ENCODE measurements at regions of chr6 and their contacts with region 1.

Region 1: DNA sequence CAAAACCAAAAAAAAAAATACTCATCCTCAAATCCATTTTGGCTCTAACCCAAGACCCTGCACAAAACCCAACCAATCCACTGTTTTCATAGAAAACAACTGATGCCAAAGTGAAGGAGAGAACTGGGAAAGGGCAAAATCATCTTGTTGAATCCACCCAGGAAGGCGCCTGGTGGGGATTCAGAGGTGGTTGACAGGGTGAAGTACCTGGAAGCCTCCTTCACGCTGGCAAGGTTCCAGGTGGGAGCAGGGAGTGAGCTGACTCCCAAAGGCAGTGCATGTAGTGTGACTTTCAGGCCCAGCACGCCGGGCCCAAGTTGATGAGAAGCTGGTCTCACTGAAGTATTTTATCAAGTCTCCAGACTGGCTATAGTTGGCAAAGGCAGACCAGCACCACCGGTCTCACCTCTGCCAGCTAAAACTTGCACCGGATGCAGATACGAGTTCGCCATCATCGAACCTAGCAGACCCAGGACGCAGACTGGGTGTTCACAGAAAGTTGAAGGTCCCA is 16.5 kb downstream of the PPP1R10 start:
- DNase-seq: no peak
- H3K4me3 ChIP-seq: no peak overlapping the region
- H3K27ac ChIP-seq: no peak overlapping the region
- H3K4me1 ChIP-seq: no peaks in the 10 kb centered on the region
- H3K27me3 ChIP-seq: no peaks in the 10 kb centered on the region
- CTCF ChIP-seq: no peak
- EP300 ChIP-seq: no peak
- POLR2A ChIP-seq: no peak
- RAD21 ChIP-seq: no peak

Region 2: DNA sequence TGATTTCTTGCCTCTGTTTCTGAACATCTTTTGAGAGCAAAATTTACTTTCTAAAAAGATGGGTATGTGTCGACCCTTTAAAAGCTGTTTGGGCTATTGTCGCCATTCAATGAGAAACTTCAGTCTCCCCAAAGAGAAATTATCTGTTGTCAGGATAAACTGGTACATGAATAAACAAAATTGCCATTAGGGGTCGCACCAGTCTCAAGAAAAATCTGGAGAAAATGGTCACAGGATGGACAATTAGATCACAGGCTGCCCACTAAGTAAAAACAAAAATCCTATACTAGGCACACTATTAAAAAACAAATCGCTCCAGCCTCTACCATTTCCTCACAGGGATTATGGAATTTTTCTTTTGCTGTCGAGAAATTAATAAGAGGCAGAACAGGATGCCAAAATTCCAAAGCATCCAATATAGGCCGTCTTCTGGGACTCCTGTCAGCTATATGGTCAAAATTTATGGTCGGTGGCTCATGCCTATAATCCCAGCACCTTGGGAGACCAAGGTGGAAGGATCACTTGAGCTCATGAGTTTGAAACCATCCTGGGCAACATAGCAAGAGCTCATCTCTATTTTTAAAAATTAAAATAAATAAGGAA is 116.7 kb before region 1 on chr6:
- CTCF ChIA-PET with region 1: interaction called, 35 read pairs
- POLR2A ChIA-PET with region 1: interaction called, 6 read pairs
- DNase-seq: no peak
- H3K4me3 ChIP-seq: no peak overlapping the region
- H3K27ac ChIP-seq: no peak overlapping the region
- H3K4me1 ChIP-seq: peaks cover 0 to 2% (median 0%) of the 10 kb centered on the region in 4 experiments; a peak in 3 of 7 replicates
- H3K27me3 ChIP-seq: peaks cover 7 to 23% (median 17%) of the 10 kb centered on the region in 4 experiments; a peak in 6 of 7 replicates
- CTCF ChIP-seq: peak in 2 of 3 experiments; percentile 49 to 63; a peak in 3 of 4 replicates
- EP300 ChIP-seq: no peak
- POLR2A ChIP-seq: no peak
- RAD21 ChIP-seq: peak; percentile 68 to 75

Region 3: DNA sequence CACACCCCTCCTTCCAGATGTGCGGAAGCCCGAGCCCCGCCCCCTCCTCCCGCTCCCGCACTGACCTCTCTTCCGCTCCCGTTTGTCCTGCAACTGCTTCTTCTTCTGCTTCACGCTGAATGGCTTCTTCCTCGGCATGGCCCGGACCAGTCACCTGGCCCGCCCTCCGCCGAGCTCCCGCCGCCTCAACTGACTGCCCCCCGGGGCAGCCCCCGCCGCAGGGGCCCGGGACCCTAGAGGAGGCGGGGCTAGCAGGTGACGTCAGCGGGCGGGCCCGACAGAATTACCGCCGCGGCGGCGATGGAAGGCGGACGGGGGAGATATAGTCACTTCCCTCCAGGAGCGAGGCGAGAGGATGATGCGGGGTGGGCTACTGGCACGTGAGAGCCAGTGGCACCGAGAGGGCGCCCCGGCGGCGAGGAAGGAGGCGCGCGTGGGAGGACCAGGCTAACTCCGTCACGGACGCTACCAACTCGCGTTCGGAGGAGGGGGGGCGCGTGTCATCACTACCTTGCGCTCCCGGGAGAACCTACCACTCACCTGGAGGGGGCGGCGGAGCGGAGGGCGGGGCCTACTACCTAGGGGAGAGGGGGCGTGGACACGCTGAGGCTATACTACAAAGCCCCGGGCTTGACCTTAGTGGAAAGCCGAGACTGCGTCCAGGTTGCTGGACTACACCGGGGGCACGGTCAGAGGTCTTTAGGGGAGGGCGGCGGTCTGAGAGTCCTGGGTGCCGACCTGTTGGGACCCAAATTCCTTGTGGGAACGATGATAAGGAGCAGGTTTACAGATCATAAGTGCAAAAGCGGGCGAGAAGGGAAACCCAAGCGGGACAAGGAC is 44.2 kb before region 1 on chr6 and contains the start of gene GNL1:
- CTCF ChIA-PET with region 1: interaction called, 6 read pairs
- POLR2A ChIA-PET with region 1: interaction called, 10 read pairs
- DNase-seq: peak; percentile 90 to 98
- H3K4me3 ChIP-seq: peak within 1 kb of the TSS; percentile 76 to 91 (median 89)
- H3K27ac ChIP-seq: peak within 1 kb of the TSS; percentile 93
- H3K4me1 ChIP-seq: peaks cover 0 to 3% (median 1%) of the 10 kb centered on the region in 4 experiments; a peak in 1 of 7 replicates
- H3K27me3 ChIP-seq: no peaks in the 10 kb centered on the region
- CTCF ChIP-seq: no peak
- EP300 ChIP-seq: peak in 1 of 2 experiments; percentile 99; a peak in 2 of 3 replicates
- POLR2A ChIP-seq: no peak
- RAD21 ChIP-seq: no peak
- total RNA-seq, gene GNL1: 67.8 and 75.4 TPM in 2 replicates

Region 4: DNA sequence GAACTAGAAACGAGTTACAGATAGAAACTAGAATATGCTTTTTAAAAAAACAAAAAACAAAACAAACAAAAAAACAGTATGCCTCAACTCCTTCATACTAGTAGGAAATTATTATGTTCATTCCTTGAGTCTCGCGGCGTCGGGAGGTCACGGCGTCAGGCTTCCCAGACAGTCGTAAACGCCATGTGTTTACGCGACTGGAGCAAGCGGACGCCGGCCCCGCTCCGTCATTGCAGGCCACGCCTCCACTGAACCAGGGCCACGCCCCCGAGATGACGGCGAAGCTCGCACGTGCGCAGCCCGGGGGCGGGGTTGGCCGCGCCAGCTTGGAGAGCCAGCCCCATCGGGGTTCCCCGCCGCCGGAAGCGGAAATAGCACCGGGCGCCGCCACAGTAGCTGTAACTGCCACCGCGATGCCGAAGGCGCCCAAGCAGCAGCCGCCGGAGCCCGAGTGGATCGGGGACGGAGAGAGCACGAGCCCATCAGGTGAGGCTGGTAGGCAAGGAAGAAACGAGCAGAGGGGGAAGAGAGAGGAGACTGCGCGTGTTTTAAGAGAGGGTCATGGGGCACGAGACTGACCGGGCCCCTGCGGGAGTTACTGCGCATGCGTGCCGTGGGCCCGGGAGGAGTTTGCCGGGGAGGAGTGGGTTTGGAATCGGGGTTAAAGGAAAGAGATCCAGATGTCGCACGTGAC is 29.3 kb before region 1 on chr6 and contains the start of gene ABCF1:
- CTCF ChIA-PET with region 1: interaction called, 11 read pairs
- POLR2A ChIA-PET with region 1: interaction called, 712 read pairs
- DNase-seq: peak; percentile 90 to 100
- H3K4me3 ChIP-seq: peak within 1 kb of the TSS; percentile 88 to 98 (median 95)
- H3K27ac ChIP-seq: peak within 1 kb of the TSS; percentile 95
- H3K4me1 ChIP-seq: peaks cover 0 to 4% (median 2%) of the 10 kb centered on the region in 4 experiments; a peak in 5 of 7 replicates
- H3K27me3 ChIP-seq: no peaks in the 10 kb centered on the region
- CTCF ChIP-seq: no peak
- EP300 ChIP-seq: no peak
- POLR2A ChIP-seq: peak in 1 of 2 experiments; percentile 94; a peak in 2 of 3 replicates
- RAD21 ChIP-seq: no peak
- total RNA-seq, gene ABCF1: 119 and 123 TPM in 2 replicates

Region 5: DNA sequence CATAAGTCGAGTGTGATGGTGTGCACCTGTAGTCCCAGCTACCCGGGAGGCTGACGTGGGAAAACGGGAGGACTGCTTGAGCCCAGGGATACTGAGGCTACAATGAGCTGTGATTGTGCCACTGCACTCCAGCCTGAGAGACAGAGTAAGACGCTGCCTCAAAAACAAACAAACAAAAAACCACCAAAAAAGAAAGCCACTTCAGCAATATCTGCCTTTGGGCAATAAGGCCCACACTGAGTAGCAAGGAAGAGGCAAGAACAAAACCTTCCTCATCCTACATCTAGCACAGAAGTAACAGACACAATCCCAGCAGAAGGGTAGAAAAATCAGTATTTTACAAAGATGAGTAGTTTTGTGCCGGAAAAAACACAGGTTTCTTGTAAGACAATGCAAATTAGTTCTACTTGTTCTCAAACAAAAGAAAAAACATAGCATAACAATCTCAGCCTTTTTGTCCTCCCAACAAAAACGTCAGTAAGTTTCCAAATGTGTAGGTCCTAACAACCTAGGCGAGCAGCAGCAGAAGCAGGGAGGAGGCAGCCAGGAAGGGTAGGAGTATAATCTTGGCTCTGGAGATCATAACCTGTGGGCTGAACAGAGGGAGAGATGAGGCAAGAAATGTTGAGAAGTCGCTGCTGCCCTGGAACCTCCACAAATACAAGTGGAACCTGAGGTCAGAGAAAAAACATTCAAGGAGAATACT is 10.8 kb after region 1 on chr6:
- CTCF ChIA-PET with region 1: interaction called, 20 read pairs
- POLR2A ChIA-PET with region 1: interaction called, 712 read pairs
- DNase-seq: no peak
- H3K4me3 ChIP-seq: no peak overlapping the region
- H3K27ac ChIP-seq: no peak overlapping the region
- H3K4me1 ChIP-seq: peaks cover 0 to 6% (median 3%) of the 10 kb centered on the region in 4 experiments; a peak in 4 of 7 replicates
- H3K27me3 ChIP-seq: no peaks in the 10 kb centered on the region
- CTCF ChIP-seq: no peak
- EP300 ChIP-seq: no peak
- POLR2A ChIP-seq: no peak
- RAD21 ChIP-seq: no peak

Region 6: DNA sequence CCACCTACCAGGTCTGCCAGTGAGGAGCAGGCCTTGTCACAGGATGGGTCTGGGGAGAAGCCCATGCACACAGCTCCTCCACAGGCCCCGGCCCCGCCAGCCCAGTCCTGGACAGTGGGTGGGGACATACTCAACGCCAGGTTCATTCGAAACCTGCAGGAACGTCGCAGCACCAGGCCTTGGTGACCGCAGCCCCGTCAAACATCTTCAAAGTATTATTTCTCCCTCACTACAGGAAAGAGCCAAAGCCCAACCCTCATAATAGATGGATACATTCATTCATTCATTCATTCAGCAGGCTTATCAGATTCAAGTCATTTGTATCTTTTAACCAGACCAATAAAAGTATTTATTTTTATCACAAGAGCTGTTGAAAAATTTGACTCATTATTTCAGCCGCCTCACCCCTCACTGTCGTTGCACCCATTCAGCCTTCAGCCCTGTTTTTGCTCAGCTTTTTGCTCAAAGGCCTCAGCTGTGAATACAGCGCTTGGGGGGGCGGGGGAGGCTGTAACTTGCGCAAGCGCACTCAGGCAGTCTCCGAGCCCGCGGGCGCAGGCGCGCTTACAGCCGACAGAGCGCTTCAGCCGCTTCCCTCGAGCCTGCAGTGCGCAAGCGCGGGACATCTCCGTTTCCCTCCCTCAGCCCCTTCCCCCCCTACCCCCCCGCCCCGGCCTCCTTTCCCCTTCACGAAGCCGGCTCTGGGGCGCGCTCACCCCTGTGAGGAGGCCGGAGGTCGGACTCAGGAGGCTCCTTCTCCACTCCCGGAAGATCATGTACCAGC is 46.1 kb after region 1 on chr6 and contains the start of gene C6orf136:
- CTCF ChIA-PET with region 1: interaction called, 5 read pairs
- POLR2A ChIA-PET with region 1: interaction called, 16 read pairs
- DNase-seq: peak; percentile 75 to 87
- H3K4me3 ChIP-seq: peak within 1 kb of the TSS; percentile 74 to 91 (median 85)
- H3K27ac ChIP-seq: peak within 1 kb of the TSS; percentile 66
- H3K4me1 ChIP-seq: peaks cover 0 to 6% (median 4%) of the 10 kb centered on the region in 4 experiments; a peak in 5 of 7 replicates
- H3K27me3 ChIP-seq: no peaks in the 10 kb centered on the region
- CTCF ChIP-seq: no peak
- EP300 ChIP-seq: no peak
- POLR2A ChIP-seq: no peak
- RAD21 ChIP-seq: no peak
- total RNA-seq, gene C6orf136: 18.2 and 20.8 TPM in 2 replicates

Region 7: DNA sequence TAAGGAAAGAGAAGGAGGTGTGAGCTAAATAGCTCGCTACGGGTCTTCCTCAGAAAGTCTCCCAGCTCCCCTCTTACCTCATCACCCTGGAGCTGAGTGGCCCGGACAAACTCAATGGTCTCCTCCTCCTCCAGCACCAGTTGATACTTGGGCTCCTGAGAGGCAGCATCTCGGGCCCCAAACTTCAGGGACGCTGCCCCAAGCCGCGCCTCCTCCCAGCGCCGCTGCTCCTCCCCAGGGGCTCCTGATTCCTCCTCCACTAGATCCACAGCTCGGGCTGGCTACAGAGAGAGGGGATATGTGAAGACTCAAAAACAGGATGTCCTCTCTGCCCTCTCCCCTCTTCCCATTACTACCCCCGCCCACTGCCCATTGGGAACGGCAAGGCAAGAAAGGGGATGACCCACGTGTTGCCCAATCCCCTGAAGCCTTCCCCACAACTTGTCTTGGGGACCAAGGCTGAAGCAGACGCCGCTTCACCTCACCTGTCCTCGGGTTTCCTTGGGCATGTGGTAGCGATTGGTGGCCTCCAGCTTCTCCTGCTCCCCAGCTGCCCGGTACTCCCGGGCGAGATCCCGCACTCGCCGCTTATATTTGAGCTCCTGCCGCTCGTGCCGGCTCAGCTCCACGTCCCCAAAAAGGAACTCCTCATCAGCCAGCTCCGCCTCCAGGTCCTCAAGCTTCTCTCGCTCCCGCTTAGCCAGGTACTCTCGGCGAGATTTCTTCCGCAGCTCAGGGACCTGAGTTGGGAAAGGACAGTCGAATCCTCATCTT is 64.7 kb after region 1 on chr6:
- CTCF ChIA-PET with region 1: interaction called, 3 read pairs
- POLR2A ChIA-PET with region 1: interaction called, 10 read pairs
- DNase-seq: no peak
- H3K4me3 ChIP-seq: no peak overlapping the region
- H3K27ac ChIP-seq: no peak overlapping the region
- H3K4me1 ChIP-seq: no peaks in the 10 kb centered on the region
- H3K27me3 ChIP-seq: no peaks in the 10 kb centered on the region
- CTCF ChIP-seq: no peak
- EP300 ChIP-seq: no peak
- POLR2A ChIP-seq: no peak
- RAD21 ChIP-seq: no peak

Region 8: GRCh38 chr6:31175971-31176370 is 575.5 kb after region 1 on chr6:
- CTCF ChIA-PET with region 1: no interaction called
- POLR2A ChIA-PET with region 1: no interaction called
- DNase-seq: no peak
- H3K4me3 ChIP-seq: no peak overlapping the region
- H3K27ac ChIP-seq: no peak overlapping the region
- H3K4me1 ChIP-seq: peaks cover 18 to 37% (median 30%) of the 10 kb centered on the region in 4 experiments
- H3K27me3 ChIP-seq: no peaks in the 10 kb centered on the region
- CTCF ChIP-seq: no peak
- EP300 ChIP-seq: no peak
- POLR2A ChIP-seq: no peak
- RAD21 ChIP-seq: no peak

Measured in H1 (cell line).